CD8-positive, alpha-beta memory T cell (primary cell): ENCODE measurements at regions of chr7 and their contacts with region 1.

Region 1: DNA sequence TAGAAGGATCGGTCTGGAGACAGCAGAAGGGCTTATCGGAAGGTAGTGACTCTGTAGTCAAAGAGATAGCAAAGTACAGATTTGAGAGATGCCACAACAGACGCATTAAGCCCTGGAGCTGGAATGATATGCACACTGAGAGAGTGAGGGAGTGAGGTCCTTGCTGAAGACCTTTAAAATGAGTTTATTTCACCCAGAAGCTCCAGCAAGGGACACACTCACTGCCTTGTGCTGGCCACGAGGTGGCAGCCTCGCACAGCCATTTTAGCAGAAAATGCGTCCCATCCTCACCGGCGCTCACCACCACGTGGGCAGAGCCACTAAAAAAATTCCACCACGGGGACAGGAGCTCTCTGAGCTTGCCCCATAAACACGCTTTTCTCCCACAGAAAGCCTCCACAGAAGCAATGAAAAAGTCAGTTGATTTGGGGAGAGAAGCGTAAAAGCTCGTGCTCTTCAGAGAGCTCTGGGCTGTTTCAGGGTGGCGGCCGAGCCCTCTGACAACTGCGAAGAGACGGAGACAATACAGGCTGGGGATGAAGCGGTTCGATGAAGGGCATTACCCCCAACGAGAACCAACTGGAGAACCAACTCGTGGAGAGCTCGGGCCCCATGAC is 163.0 kb upstream of the KLF14 start:
- DNase-seq: peak; percentile 63 to 82 (median 66)
- H3K4me3 ChIP-seq: no peak overlapping the region
- H3K4me3 Mint-ChIP-seq: peak overlapping the region; percentile 13 to 65 (median 38)
- H3K27ac ChIP-seq: no peak overlapping the region
- H3K27ac Mint-ChIP-seq: peak overlapping the region in 7 of 8 donors; percentile 76 to 94 (median 91)
- H3K4me1 ChIP-seq: peaks cover 42% of the 10 kb centered on the region
- H3K4me1 Mint-ChIP-seq: peaks cover 66 to 95% (median 82%) of the 10 kb centered on the region in 3 donors
- H3K27me3 ChIP-seq: no peaks in the 10 kb centered on the region
- H3K27me3 Mint-ChIP-seq: peaks cover 0 to 3% of the 10 kb centered on the region in 2 donors

Region 2: GRCh38 chr7:130838738-130839137 is 58.3 kb before region 1 on chr7:
- CTCF ChIA-PET with region 1: no interaction called
- POLR2A ChIA-PET with region 1: no interaction called
- DNase-seq: no peak
- H3K4me3 ChIP-seq: no peak overlapping the region
- H3K4me3 Mint-ChIP-seq: no peak overlapping the region
- H3K27ac ChIP-seq: no peak overlapping the region
- H3K27ac Mint-ChIP-seq: peak overlapping the region in 1 of 8 donors; percentile 34
- H3K4me1 ChIP-seq: no peaks in the 10 kb centered on the region
- H3K4me1 Mint-ChIP-seq: peaks cover 8 to 16% (median 10%) of the 10 kb centered on the region in 3 donors
- H3K27me3 ChIP-seq: peaks cover 5% of the 10 kb centered on the region
- H3K27me3 Mint-ChIP-seq: peaks cover 12 to 42% of the 10 kb centered on the region in 2 donors

Region 3: GRCh38 chr7:130912086-130912861 is 15.3 kb after region 1 on chr7:
- CTCF ChIA-PET with region 1: interaction called, 27 read pairs
- POLR2A ChIA-PET with region 1: no interaction called
- DNase-seq: peak in 2 of 5 donors; percentile 28 to 43
- H3K4me3 ChIP-seq: peak overlapping the region; percentile 80
- H3K4me3 Mint-ChIP-seq: peak overlapping the region; percentile 89 to 96 (median 92)
- H3K27ac ChIP-seq: peak overlapping the region; percentile 84
- H3K27ac Mint-ChIP-seq: peak overlapping the region; percentile 93 to 98 (median 96)
- H3K4me1 ChIP-seq: peaks cover 76% of the 10 kb centered on the region
- H3K4me1 Mint-ChIP-seq: peaks cover 84 to 94% (median 93%) of the 10 kb centered on the region in 3 donors
- H3K27me3 ChIP-seq: no peaks in the 10 kb centered on the region
- H3K27me3 Mint-ChIP-seq: peaks cover 0 to 3% of the 10 kb centered on the region in 2 donors

Region 4: DNA sequence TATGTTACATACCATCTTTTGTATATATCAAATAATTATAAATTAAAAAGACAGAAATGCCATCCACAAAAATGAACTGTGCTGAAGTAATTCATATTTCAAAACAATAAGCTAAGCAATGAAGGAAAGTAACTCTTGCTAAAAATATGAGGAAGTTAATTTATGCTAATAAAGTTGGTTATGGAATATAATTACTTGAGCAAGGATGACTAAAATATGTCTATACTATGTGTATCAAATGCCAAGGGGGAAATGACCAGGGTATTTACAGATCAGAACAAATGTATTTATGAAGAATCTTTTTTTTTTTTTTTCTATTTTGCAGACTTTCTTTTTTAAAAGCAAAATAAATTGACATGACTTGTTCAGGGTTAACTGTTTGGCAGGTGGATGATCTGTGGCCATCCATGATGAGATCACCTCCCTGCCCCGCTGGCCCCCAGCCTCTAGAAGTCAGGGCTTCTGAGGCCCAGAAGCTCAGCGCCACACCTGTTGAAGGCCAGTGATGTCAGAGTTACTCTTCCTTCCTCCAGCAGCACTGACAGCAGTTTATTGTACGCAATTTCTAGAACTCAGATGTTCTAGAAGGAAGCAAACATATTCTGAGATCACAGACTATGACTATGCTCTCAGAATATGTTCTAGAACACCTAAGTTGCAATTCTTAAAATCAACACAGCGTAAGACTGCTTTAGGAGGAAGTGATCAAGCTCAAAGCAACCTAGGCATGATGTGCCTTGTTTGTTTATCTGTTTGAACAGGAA is 33.1 kb after region 1 on chr7:
- CTCF ChIA-PET with region 1: interaction called, 12 read pairs
- POLR2A ChIA-PET with region 1: no interaction called
- DNase-seq: peak in 2 of 5 donors; percentile 17 to 66
- H3K4me3 ChIP-seq: no peak overlapping the region
- H3K4me3 Mint-ChIP-seq: peak overlapping the region in 6 of 7 donors; percentile 7 to 52 (median 36)
- H3K27ac ChIP-seq: no peak overlapping the region
- H3K27ac Mint-ChIP-seq: peak overlapping the region; percentile 61 to 92 (median 83)
- H3K4me1 ChIP-seq: peaks cover 79% of the 10 kb centered on the region
- H3K4me1 Mint-ChIP-seq: peaks cover 76 to 98% (median 96%) of the 10 kb centered on the region in 3 donors
- H3K27me3 ChIP-seq: no peaks in the 10 kb centered on the region
- H3K27me3 Mint-ChIP-seq: no peaks in the 10 kb centered on the region

Region 5: GRCh38 chr7:130982160-130982638 is 85.2 kb after region 1 on chr7:
- CTCF ChIA-PET with region 1: interaction called, 15 read pairs
- POLR2A ChIA-PET with region 1: no interaction called
- DNase-seq: peak in 2 of 5 donors; percentile 44 to 56
- H3K4me3 ChIP-seq: no peak overlapping the region
- H3K4me3 Mint-ChIP-seq: no peak overlapping the region
- H3K27ac ChIP-seq: no peak overlapping the region
- H3K27ac Mint-ChIP-seq: no peak overlapping the region
- H3K4me1 ChIP-seq: peaks cover 69% of the 10 kb centered on the region
- H3K4me1 Mint-ChIP-seq: peaks cover 14 to 40% (median 20%) of the 10 kb centered on the region in 3 donors
- H3K27me3 ChIP-seq: no peaks in the 10 kb centered on the region
- H3K27me3 Mint-ChIP-seq: no peaks in the 10 kb centered on the region

Region 6: DNA sequence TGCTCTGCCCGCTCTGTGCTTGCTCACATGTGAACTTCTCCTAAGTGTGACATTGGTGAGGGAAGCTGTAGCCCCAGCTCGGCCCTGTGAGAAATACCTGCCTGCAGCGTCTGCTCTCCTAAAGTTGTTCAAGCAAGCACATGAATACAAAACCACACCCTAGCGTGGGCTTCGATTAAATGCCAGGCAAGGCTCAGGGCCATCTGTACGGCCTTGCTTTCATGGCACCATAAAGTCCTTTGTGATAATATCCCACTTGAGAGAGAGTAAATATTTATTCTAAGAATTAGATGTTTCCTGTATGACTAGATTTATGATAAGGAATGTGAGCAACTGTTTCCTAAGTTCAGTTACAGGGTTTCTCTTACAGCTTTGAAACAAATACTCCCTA is 99.8 kb after region 1 on chr7:
- CTCF ChIA-PET with region 1: interaction called, 13 read pairs
- POLR2A ChIA-PET with region 1: no interaction called
- DNase-seq: no peak
- H3K4me3 ChIP-seq: no peak overlapping the region
- H3K4me3 Mint-ChIP-seq: peak overlapping the region; percentile 7 to 72 (median 49)
- H3K27ac ChIP-seq: no peak overlapping the region
- H3K27ac Mint-ChIP-seq: peak overlapping the region; percentile 63 to 94 (median 85)
- H3K4me1 ChIP-seq: peaks cover 78% of the 10 kb centered on the region
- H3K4me1 Mint-ChIP-seq: peaks cover 73 to 92% (median 91%) of the 10 kb centered on the region in 3 donors
- H3K27me3 ChIP-seq: no peaks in the 10 kb centered on the region
- H3K27me3 Mint-ChIP-seq: no peaks in the 10 kb centered on the region

Region 7: DNA sequence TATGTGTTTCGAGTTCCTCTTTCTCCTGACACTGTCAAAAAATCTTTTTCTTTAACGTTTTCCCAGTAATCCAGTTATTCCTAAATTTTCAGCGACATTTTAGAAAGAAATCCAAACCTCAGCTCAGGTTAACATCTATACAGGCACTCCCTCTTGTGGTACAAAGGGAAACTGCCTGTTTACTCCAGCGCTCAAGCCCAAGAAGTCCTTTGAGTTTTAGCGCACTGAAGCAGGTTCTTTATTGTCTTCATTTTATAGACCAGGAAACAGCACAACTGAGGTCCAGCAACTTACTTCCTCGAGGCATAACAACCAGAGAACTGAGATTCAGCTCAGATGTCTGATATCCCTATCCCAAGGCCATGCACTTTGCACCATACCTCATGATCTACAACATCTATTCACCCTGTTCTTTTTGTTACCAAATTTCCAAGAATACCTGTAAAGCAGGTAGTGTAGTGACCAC is 143.5 kb after region 1 on chr7:
- CTCF ChIA-PET with region 1: interaction called, 35 read pairs
- POLR2A ChIA-PET with region 1: interaction called, 3 read pairs
- DNase-seq: peak in 3 of 5 donors; percentile 39 to 61 (median 53)
- H3K4me3 ChIP-seq: no peak overlapping the region
- H3K4me3 Mint-ChIP-seq: peak overlapping the region in 5 of 7 donors; percentile 1 to 64 (median 34)
- H3K27ac ChIP-seq: no peak overlapping the region
- H3K27ac Mint-ChIP-seq: peak overlapping the region; percentile 27 to 86 (median 62)
- H3K4me1 ChIP-seq: peaks cover 29% of the 10 kb centered on the region
- H3K4me1 Mint-ChIP-seq: peaks cover 64 to 78% (median 75%) of the 10 kb centered on the region in 3 donors
- H3K27me3 ChIP-seq: no peaks in the 10 kb centered on the region
- H3K27me3 Mint-ChIP-seq: no peaks in the 10 kb centered on the region